ENCODE measurements at regions of chr17 and their contacts with region 1.

Region 1: GRCh38 chr17:48374650-48375230 is 55.3 kb downstream of the SKAP1 start:
- DNase-seq: peak; percentile 81 to 88
- H3K4me3 ChIP-seq: no peak overlapping the region
- H3K4me3 Mint-ChIP-seq: no peak overlapping the region
- H3K27ac Mint-ChIP-seq: no peak overlapping the region
- H3K4me1 ChIP-seq: no peaks in the 10 kb centered on the region
- H3K4me1 Mint-ChIP-seq: no peaks in the 10 kb centered on the region
- H3K27me3 ChIP-seq: no peaks in the 10 kb centered on the region; the same call in 1 of the 2 replicates
- H3K27me3 Mint-ChIP-seq: peaks cover 2% of the 10 kb centered on the region
- CTCF ChIP-seq: peak; percentile 98

Region 2: DNA sequence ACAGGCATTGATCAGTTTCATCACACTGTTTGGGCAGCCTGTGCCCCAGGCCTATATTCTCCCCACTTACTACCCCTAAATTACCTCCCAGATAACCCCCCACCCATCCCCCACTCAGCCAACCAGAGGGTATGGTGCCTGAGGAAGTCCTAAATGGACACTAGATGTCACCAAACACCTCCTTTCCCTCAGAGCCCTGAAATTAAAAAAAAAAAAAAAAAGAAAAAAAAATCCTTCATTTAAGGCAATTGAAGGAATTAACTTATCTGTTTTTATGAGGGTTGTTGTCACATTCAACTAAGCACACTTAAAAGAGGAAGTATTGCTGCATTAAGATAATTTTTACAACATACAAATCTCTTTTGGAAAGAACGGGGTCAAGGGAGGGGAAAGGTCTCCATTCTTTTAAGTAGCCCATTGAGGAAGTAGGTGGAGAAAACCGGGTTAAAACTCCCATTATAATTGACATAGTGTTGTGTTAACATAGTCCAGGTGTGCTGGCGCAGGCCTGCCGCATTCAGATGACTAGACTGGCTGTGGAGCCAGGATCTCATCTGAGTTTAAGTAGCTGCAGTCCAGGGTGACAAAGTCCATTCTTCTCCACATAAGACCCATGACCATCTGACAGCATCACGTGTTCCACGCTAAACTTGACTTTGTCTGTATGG is 220.9 kb before region 1 on chr17:
- CTCF ChIA-PET with region 1: interaction called, 3 read pairs
- POLR2A ChIA-PET with region 1: no interaction called
- intact Hi-C with region 1: loop called (anchors 1 kb)
- DNase-seq: peak; percentile 80 to 88
- H3K4me3 ChIP-seq: no peak overlapping the region
- H3K4me3 Mint-ChIP-seq: peak overlapping the region; percentile 28
- H3K27ac Mint-ChIP-seq: no peak overlapping the region
- H3K4me1 ChIP-seq: peaks cover 10% of the 10 kb centered on the region
- H3K4me1 Mint-ChIP-seq: peaks cover 14% of the 10 kb centered on the region
- H3K27me3 ChIP-seq: peaks cover 2% of the 10 kb centered on the region; the same call in 1 of the 2 replicates
- H3K27me3 Mint-ChIP-seq: peaks cover 15% of the 10 kb centered on the region
- CTCF ChIP-seq: peak; percentile 88 to 93

Region 3: DNA sequence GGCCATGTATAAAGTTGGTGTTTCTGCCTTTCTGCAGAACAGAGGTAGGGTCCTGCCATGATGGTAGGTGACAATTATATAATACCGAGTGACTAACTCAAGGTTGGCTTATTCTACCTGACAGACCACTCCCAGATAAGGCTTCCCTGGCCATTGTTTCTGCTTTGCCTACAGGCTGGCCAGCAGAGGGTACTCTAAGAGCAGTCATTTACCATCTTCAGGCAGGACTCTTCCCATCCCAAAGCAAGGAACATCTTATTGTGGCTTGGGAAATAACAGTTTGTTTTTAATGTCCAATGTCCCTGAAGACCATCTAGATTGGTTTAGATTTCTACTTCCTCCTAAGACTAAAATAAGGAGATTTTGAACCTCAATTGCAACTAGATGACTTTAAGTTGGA is 193.1 kb before region 1 on chr17:
- CTCF ChIA-PET with region 1: no interaction called
- POLR2A ChIA-PET with region 1: no interaction called
- intact Hi-C with region 1: loop called (anchors 1 kb)
- DNase-seq: peak; percentile 67 to 76
- H3K4me3 ChIP-seq: no peak overlapping the region
- H3K4me3 Mint-ChIP-seq: no peak overlapping the region
- H3K27ac Mint-ChIP-seq: no peak overlapping the region
- H3K4me1 ChIP-seq: no peaks in the 10 kb centered on the region
- H3K4me1 Mint-ChIP-seq: no peaks in the 10 kb centered on the region
- H3K27me3 ChIP-seq: 0 out of 2 replicates have a peak, but pooled peaks cover 2% of the 10 kb centered on the region
- H3K27me3 Mint-ChIP-seq: peaks cover 18% of the 10 kb centered on the region
- CTCF ChIP-seq: peak; percentile 77 to 95

Region 4: DNA sequence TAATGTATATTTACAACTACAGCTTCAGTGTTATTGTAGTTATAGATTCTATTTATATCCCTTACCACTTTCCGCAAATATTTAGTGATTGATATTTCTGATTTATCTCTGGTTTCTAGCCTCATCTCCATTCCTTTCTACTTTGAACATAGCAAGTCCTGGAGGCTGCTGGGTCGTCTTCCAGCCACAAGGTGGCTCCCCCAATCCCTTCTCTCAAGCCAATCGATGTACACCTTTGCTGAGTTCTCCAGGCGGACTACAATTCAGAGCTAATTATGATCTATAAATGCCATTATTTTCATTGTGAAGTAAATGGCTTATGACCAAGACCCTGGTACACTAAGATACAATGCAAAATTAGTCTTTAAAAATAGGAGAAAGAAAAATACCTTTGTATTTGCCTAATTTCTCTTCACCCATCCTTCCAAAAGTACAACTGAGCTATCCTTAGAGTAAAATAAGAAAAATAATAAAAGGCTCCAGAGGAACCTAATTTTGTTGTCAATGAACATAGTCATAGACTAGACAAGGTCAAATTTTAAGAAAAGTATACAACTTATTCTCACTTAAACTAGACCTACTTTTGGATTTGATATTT is 66.8 kb before region 1 on chr17:
- CTCF ChIA-PET with region 1: interaction called, 4 read pairs
- POLR2A ChIA-PET with region 1: no interaction called
- intact Hi-C with region 1: loop called (anchors 5 kb)
- DNase-seq: peak; percentile 83
- H3K4me3 ChIP-seq: no peak overlapping the region
- H3K4me3 Mint-ChIP-seq: no peak overlapping the region
- H3K27ac Mint-ChIP-seq: no peak overlapping the region
- H3K4me1 ChIP-seq: peaks cover 15% of the 10 kb centered on the region
- H3K4me1 Mint-ChIP-seq: peaks cover 14% of the 10 kb centered on the region
- H3K27me3 ChIP-seq: no peaks in the 10 kb centered on the region
- H3K27me3 Mint-ChIP-seq: peaks cover 16% of the 10 kb centered on the region
- CTCF ChIP-seq: peak; percentile 99 to 100

Region 5: DNA sequence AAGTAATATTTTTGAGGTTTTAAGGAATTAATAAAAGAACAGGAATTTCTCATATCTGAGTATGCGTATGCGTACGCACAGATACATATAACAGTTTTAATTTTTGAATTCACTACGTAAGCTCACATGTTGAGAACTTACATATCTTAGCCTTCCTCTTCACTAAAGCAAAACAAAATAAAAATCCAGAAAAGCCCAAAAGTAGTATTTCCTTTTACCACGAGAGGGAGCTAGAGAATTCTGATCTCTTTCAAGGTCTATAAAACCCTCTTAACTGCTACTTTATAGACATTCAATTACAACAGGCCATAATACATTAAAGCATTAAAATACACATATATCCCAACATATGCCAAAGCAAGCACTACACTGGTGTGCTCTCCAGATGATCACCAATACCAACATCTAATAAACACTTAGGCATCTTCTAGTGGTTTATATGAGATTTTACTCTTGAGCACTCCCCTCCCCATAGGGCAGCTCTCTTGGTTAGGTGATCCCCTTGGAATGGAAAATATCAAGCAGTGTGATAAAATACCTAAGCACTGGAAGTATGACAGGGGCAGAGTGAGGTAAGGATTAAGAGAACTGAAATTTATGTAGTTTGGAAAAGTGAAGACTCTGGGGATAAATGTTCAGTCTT is 38.8 kb before region 1 on chr17:
- CTCF ChIA-PET with region 1: interaction called, 4 read pairs
- POLR2A ChIA-PET with region 1: no interaction called
- intact Hi-C with region 1: loop called (anchors 1 kb)
- DNase-seq: peak in 1 of 2 experiments; percentile 79
- H3K4me3 ChIP-seq: no peak overlapping the region
- H3K4me3 Mint-ChIP-seq: no peak overlapping the region
- H3K27ac Mint-ChIP-seq: no peak overlapping the region
- H3K4me1 ChIP-seq: no peaks in the 10 kb centered on the region
- H3K4me1 Mint-ChIP-seq: no peaks in the 10 kb centered on the region
- H3K27me3 ChIP-seq: no peaks in the 10 kb centered on the region; the same call in 1 of the 2 replicates
- H3K27me3 Mint-ChIP-seq: peaks cover 18% of the 10 kb centered on the region
- CTCF ChIP-seq: peak; percentile 90 to 96

Region 6: DNA sequence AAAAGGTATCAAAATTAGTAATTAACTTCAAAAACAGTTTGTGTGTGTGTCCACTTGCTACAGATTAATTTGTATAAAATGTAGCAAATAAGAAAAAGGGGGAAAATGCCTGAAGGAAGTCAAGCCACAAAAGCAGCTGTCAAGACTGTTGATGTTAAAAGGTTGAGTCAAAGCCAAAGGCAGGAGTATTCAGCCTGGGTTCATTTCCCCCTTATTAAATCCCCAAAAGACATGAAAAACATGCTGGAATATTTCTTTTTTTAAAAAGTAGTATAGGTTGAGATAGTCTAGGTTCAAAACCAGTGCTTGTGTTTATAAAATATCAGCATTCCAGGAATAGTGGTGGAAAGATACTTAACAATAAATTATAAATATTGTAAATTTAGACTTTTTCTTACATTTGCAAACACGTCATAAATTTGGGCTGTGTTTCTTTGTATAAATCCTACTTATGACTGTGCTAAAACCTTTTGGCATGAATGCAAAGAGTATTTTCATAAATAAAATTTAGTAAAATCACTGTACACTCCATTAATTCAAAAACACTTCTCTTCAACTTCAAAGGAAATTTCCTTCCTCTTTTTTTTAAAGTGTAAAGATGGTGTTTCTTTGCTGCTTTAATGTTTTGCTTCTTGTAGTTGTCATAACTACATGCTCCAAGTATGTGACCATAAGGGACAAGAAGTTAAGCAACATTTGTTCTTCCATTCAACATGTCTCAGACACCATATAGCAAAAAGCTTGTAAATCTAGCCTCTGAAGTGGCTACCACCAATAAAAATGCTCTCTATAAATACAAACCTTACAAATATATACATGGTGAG is 16.7 kb before region 1 on chr17:
- CTCF ChIA-PET with region 1: interaction called, 5 read pairs
- POLR2A ChIA-PET with region 1: no interaction called
- intact Hi-C with region 1: loop called (anchors 1 kb)
- DNase-seq: no peak
- H3K4me3 ChIP-seq: no peak overlapping the region
- H3K4me3 Mint-ChIP-seq: no peak overlapping the region
- H3K27ac Mint-ChIP-seq: no peak overlapping the region
- H3K4me1 ChIP-seq: no peaks in the 10 kb centered on the region
- H3K4me1 Mint-ChIP-seq: no peaks in the 10 kb centered on the region
- H3K27me3 ChIP-seq: no peaks in the 10 kb centered on the region
- H3K27me3 Mint-ChIP-seq: peaks cover 16% of the 10 kb centered on the region
- CTCF ChIP-seq: no peak